Common myeloid progenitor, CD34-positive (primary cell): ENCODE measurements at regions of chr4 and their contacts with region 1.

Region 1: GRCh38 chr4:123661080-123661737 is 264.6 kb downstream of the SPRY1 start:
- DNase-seq: peak; percentile 15 to 34 (median 30)
- H3K4me3 ChIP-seq: no peak overlapping the region
- H3K27ac ChIP-seq: no peak overlapping the region
- H3K4me1 ChIP-seq: peaks cover 0 to 4% (median 0%) of the 10 kb centered on the region in 4 experiments
- H3K27me3 ChIP-seq: no peaks in the 10 kb centered on the region

Region 2: GRCh38 chr4:123127218-123127617 is 534.0 kb before region 1 on chr4:
- CTCF ChIA-PET with region 1: interaction called, 78 read pairs
- POLR2A ChIA-PET with region 1: no interaction called
- DNase-seq: peak; percentile 21 to 57 (median 44)
- H3K4me3 ChIP-seq: no peak overlapping the region
- H3K27ac ChIP-seq: no peak overlapping the region
- H3K4me1 ChIP-seq: no peaks in the 10 kb centered on the region
- H3K27me3 ChIP-seq: no peaks in the 10 kb centered on the region

Region 3: GRCh38 chr4:123396307-123397143 is 264.7 kb before region 1 on chr4 and contains the start of gene SPRY1:
- CTCF ChIA-PET with region 1: interaction called, 84 read pairs
- POLR2A ChIA-PET with region 1: interaction called, 3 read pairs
- DNase-seq: peak; percentile 88 to 96 (median 95)
- H3K4me3 ChIP-seq: peak within 1 kb of the TSS; percentile 64 to 99 (median 83)
- H3K27ac ChIP-seq: peak within 1 kb of the TSS; percentile 25 to 73
- H3K4me1 ChIP-seq: peaks cover 15 to 39% (median 21%) of the 10 kb centered on the region in 4 experiments
- H3K27me3 ChIP-seq: no peaks in the 10 kb centered on the region

Region 4: DNA sequence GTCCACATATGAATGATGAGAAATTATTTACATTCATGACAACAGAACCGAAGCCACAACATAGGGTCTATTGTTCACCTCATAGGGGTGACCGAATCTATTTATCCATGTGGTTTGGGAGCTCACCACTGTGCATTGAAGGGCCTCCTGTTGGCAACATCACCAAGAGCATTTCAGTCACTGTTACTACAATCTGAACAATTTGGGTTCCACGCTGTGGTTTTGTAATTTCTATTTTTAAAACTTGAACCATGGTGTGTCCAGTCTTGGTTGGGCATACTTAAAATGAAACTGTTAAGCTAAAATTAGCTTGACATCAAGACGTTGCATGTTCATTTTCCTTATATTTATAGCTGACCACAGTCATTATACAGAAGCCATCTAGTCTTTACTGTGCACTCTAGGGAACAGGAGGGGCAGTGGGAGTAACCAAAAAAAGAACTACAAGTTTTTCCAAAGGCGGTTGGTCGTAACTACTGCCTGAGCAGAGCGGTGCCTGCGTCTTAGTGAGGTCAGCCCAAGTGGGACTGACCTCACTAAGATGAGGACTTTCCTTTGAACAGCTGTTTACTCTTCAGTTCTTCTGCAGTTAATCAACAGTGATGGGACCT is 72.5 kb before region 1 on chr4:
- CTCF ChIA-PET with region 1: interaction called, 12 read pairs
- POLR2A ChIA-PET with region 1: no interaction called
- DNase-seq: peak in 1 of 3 donors; percentile 24
- H3K4me3 ChIP-seq: no peak overlapping the region
- H3K27ac ChIP-seq: no peak overlapping the region
- H3K4me1 ChIP-seq: peaks cover 14 to 25% (median 16%) of the 10 kb centered on the region in 4 experiments
- H3K27me3 ChIP-seq: no peaks in the 10 kb centered on the region

Region 5: GRCh38 chr4:123631786-123632692 is 29.2 kb before region 1 on chr4:
- CTCF ChIA-PET with region 1: no interaction called
- POLR2A ChIA-PET with region 1: no interaction called
- DNase-seq: peak in 2 of 3 donors; percentile 32 to 49
- H3K4me3 ChIP-seq: peak overlapping the region in 1 of 7 experiments; percentile 7
- H3K27ac ChIP-seq: no peak overlapping the region
- H3K4me1 ChIP-seq: peaks cover 0 to 10% (median 3%) of the 10 kb centered on the region in 4 experiments
- H3K27me3 ChIP-seq: no peaks in the 10 kb centered on the region

Region 6: GRCh38 chr4:123671633-123672404 is 10.6 kb after region 1 on chr4:
- CTCF ChIA-PET with region 1: interaction called, 12 read pairs
- POLR2A ChIA-PET with region 1: no interaction called
- DNase-seq: peak; percentile 14 to 68 (median 64)
- H3K4me3 ChIP-seq: peak overlapping the region in 2 of 7 experiments; percentile 13 to 29
- H3K27ac ChIP-seq: no peak overlapping the region
- H3K4me1 ChIP-seq: peaks cover 0 to 1% (median 0%) of the 10 kb centered on the region in 4 experiments
- H3K27me3 ChIP-seq: no peaks in the 10 kb centered on the region

Region 7: DNA sequence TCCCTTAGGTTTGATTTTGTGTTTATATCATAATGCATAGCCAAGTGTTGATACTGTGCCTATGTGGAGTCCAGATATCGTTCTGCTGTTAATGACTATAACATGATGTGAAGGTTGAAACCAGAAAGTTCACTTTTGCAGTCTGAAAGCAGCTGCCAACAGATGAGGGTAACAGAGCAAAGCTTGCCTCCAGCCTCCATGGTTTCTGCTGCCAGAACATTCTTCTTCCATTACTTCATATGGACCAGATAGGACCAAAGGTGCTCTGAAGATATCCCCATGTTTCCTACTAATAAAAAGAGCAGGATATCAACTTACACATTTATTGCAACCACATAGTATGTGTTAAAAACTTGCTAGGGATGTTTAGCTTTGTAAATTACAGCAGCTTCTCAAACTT is 129.5 kb after region 1 on chr4:
- CTCF ChIA-PET with region 1: no interaction called
- POLR2A ChIA-PET with region 1: no interaction called
- DNase-seq: no peak
- H3K4me3 ChIP-seq: no peak overlapping the region
- H3K27ac ChIP-seq: no peak overlapping the region
- H3K4me1 ChIP-seq: no peaks in the 10 kb centered on the region
- H3K27me3 ChIP-seq: no peaks in the 10 kb centered on the region